ENCODE measurements at regions of chr10 and their contacts with region 1.

Region 1: GRCh38 chr10:132223156-132223590 is 36.4 kb downstream of the DPYSL4 start:
- DNase-seq: peak; percentile 80
- H3K4me3 ChIP-seq: no peak overlapping the region
- H3K27ac ChIP-seq: no peak overlapping the region
- H3K4me1 ChIP-seq: no peaks in the 10 kb centered on the region
- H3K27me3 ChIP-seq: no peaks in the 10 kb centered on the region
- CTCF ChIP-seq: peak; percentile 80 to 95 (median 90)
- EP300 ChIP-seq: no peak
- POLR2A ChIP-seq: no peak

Region 2: GRCh38 chr10:132193907-132194552 is 29.1 kb before region 1 on chr10:
- in situ Hi-C with region 1: no loop called
- intact Hi-C with region 1: no loop called
- DNase-seq: no peak
- H3K4me3 ChIP-seq: no peak overlapping the region
- H3K27ac ChIP-seq: no peak overlapping the region
- H3K4me1 ChIP-seq: no peaks in the 10 kb centered on the region
- H3K27me3 ChIP-seq: peaks cover 11% of the 10 kb centered on the region
- CTCF ChIP-seq: no peak
- EP300 ChIP-seq: no peak
- POLR2A ChIP-seq: no peak

Region 3: GRCh38 chr10:132347211-132347930 is 124.2 kb after region 1 on chr10:
- in situ Hi-C with region 1: loop called (anchors 5 to 25 kb)
- intact Hi-C with region 1: loop called (anchors 5 kb)
- DNase-seq: no peak
- H3K4me3 ChIP-seq: no peak overlapping the region
- H3K27ac ChIP-seq: no peak overlapping the region
- H3K4me1 ChIP-seq: no peaks in the 10 kb centered on the region
- H3K27me3 ChIP-seq: no peaks in the 10 kb centered on the region
- CTCF ChIP-seq: no peak
- EP300 ChIP-seq: no peak
- POLR2A ChIP-seq: no peak

Region 4: GRCh38 chr10:132354356-132355094 is 131.4 kb after region 1 on chr10:
- in situ Hi-C with region 1: loop called (anchors 5 to 25 kb)
- intact Hi-C with region 1: loop called (anchors 5 kb)
- DNase-seq: no peak
- H3K4me3 ChIP-seq: no peak overlapping the region
- H3K27ac ChIP-seq: no peak overlapping the region
- H3K4me1 ChIP-seq: no peaks in the 10 kb centered on the region
- H3K27me3 ChIP-seq: no peaks in the 10 kb centered on the region
- CTCF ChIP-seq: no peak
- EP300 ChIP-seq: no peak
- POLR2A ChIP-seq: no peak

Region 5: GRCh38 chr10:132360766-132361447 is 137.7 kb after region 1 on chr10:
- in situ Hi-C with region 1: loop called in 1 of 4 experiments (anchors 10 kb)
- intact Hi-C with region 1: no loop called
- DNase-seq: no peak
- H3K4me3 ChIP-seq: no peak overlapping the region
- H3K27ac ChIP-seq: no peak overlapping the region
- H3K4me1 ChIP-seq: no peaks in the 10 kb centered on the region
- H3K27me3 ChIP-seq: no peaks in the 10 kb centered on the region
- CTCF ChIP-seq: peak in 4 of 5 experiments; percentile 41 to 57 (median 52)
- EP300 ChIP-seq: no peak
- POLR2A ChIP-seq: no peak